ENCODE measurements at regions of chr7 and their contacts with region 1.

Region 1: DNA sequence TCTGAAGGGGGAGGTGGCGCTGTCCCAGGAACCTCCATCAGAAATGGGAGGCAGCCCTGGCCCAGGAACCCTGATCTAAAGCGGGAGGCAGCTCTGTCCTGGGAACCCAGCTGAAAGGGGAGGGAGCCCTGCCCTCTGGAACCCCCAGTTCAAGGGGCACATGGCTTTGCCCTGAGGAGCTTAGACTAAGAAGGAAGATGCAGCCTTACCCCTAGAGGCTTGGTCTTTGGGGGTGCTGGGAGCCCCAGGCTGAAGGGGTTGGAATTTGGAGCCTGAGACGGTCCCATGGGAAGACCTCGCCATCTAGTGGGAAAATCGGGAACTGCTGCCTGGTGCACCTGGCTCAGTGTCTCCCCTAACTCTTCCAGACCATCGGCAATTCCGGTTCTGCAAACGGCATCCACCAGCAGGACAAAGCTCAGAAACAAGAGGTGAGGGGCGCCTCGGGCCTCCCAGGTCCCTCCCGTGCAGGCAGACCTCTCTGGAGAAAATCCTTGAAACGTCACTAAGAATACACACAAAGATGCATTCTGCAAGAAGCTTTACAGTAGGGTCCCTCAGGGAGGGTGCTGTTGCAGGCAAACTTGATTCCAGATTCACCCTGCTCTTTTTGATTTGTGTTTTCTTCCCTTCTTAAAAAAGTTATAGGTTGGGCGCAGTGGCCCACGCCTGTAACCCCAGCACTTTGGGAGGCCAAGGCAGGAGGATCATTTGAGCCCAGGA is 52.4 kb upstream of the GTF2IRD1 start:
- DNase-seq: peak; percentile 28
- ATAC-seq: peak; percentile 78
- H3K4me3 ChIP-seq: no peak overlapping the region
- H3K27ac ChIP-seq: peak overlapping the region; percentile 37
- H3K4me1 ChIP-seq: peaks cover 0 to 13% of the 10 kb centered on the region in 2 experiments; a peak in 1 of 4 replicates
- H3K27me3 ChIP-seq: no peaks in the 10 kb centered on the region
- CTCF ChIP-seq: peak; percentile 85 to 99 (median 97)
- POLR2A ChIP-seq: no peak
- RAD21 ChIP-seq: peak; percentile 93

Region 2: GRCh38 chr7:73865738-73866445 is 535.4 kb before region 1 on chr7:
- CTCF ChIA-PET with region 1: no interaction called
- POLR2A ChIA-PET with region 1: no interaction called
- RAD21 ChIA-PET with region 1: interaction called in 1 of 2 experiments, 4 read pairs
- intact Hi-C with region 1: loop called (anchors 1 kb)
- DNase-seq: no peak
- ATAC-seq: peak; percentile 88
- H3K4me3 ChIP-seq: no peak overlapping the region
- H3K27ac ChIP-seq: no peak overlapping the region
- H3K4me1 ChIP-seq: no peaks in the 10 kb centered on the region
- H3K27me3 ChIP-seq: no peaks in the 10 kb centered on the region
- CTCF ChIP-seq: peak; percentile 70 to 75 (median 73); a peak in 5 of 6 replicates
- POLR2A ChIP-seq: no peak
- RAD21 ChIP-seq: peak; percentile 91

Region 3: GRCh38 chr7:74068393-74069085 is 332.8 kb before region 1 on chr7:
- CTCF ChIA-PET with region 1: interaction called, 7 read pairs
- POLR2A ChIA-PET with region 1: no interaction called
- RAD21 ChIA-PET with region 1: interaction called in 1 of 2 experiments, 3 read pairs
- intact Hi-C with region 1: loop called (anchors 5 kb)
- DNase-seq: no peak
- ATAC-seq: no peak
- H3K4me3 ChIP-seq: no peak overlapping the region
- H3K27ac ChIP-seq: no peak overlapping the region
- H3K4me1 ChIP-seq: peaks cover 5 to 17% of the 10 kb centered on the region in 2 experiments
- H3K27me3 ChIP-seq: no peaks in the 10 kb centered on the region
- CTCF ChIP-seq: no peak
- POLR2A ChIP-seq: no peak
- RAD21 ChIP-seq: no peak

Region 4: DNA sequence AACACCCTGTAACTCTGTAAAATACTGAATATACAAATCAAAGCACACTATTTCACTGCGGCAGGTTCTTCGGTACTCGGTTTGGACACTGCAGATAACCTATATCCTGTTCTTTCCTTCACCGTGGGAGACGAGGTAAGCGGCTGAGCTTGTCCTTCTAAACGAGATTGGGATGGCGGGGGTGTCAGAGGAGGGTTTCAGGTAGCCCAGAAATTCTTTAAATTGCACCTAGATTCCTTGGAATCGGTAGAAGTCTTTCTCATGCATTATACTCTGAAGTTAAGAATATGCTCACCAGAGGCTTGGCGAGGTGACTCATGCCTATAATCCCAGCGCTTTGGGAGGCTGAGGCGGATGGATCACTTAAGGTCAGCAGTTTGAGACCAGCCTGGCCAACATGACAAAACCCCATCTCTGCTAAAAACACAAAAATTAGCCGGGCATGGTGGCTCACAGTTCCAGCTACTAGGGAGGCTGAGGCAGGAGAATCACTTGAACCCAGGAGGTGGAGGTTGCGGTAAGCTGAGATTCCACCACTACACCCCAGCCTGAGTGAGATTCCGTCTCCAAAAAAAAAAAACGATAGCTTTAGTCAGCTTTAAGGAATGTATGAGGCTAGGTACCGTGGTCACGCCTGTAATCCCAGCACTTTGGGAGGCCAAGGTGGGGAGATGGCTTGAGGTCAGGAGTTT is 201.6 kb before region 1 on chr7:
- CTCF ChIA-PET with region 1: interaction called, 79 read pairs
- POLR2A ChIA-PET with region 1: no interaction called
- RAD21 ChIA-PET with region 1: no interaction called
- intact Hi-C with region 1: no loop called
- DNase-seq: peak; percentile 78
- ATAC-seq: peak; percentile 80
- H3K4me3 ChIP-seq: peak overlapping the region in 1 of 2 experiments; percentile 38; a peak in 2 of 4 replicates
- H3K27ac ChIP-seq: peak overlapping the region; percentile 95
- H3K4me1 ChIP-seq: peaks cover 43 to 53% of the 10 kb centered on the region in 2 experiments
- H3K27me3 ChIP-seq: no peaks in the 10 kb centered on the region
- CTCF ChIP-seq: no peak
- POLR2A ChIP-seq: no peak
- RAD21 ChIP-seq: no peak

Region 5: GRCh38 chr7:74206589-74207120 is 194.6 kb before region 1 on chr7:
- CTCF ChIA-PET with region 1: interaction called, 79 read pairs
- POLR2A ChIA-PET with region 1: interaction called, 5 read pairs
- RAD21 ChIA-PET with region 1: interaction called, 11 to 19 read pairs
- intact Hi-C with region 1: loop called (anchors 1 kb)
- DNase-seq: peak; percentile 42
- ATAC-seq: peak; percentile 70
- H3K4me3 ChIP-seq: peak overlapping the region; percentile 28 to 38
- H3K27ac ChIP-seq: no peak overlapping the region
- H3K4me1 ChIP-seq: peaks cover 30 to 49% of the 10 kb centered on the region in 2 experiments
- H3K27me3 ChIP-seq: no peaks in the 10 kb centered on the region
- CTCF ChIP-seq: peak; percentile 96 to 98 (median 97)
- POLR2A ChIP-seq: no peak
- RAD21 ChIP-seq: peak; percentile 99

Region 6: DNA sequence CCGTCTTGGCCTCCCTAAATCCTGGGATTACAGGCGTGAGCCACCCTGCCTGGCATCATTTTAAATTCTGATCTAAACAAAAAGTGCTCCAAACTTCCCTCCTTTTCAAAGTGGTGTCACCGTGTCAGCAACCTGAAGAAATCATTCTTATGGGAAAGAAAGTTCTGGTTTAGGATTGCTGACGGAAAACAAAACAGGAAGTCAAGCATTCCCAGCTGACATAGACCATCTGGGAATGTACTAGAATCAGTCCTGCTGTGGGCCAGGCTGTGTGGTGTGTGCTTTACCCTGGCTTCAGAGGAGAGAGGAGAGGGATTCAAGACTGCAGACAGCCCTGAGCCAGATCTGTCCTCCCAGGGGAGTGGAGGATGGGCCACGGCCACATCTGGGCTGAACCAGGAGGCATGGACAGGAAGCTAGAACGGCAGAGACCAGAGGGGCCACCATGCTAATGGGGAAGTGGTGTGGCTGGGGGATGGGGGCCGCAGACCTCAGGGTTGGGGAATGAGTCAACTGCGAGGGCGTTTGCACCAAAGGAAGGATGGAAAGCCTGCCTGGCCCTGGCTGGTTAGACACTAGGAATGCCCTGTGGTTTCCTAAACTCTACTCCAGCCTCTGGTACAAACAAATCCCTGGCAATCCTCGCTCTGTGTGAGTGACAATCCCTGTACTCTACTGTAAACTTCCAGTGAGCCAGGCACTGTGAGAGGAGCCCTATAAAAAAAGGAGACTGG is 128.8 kb before region 1 on chr7:
- CTCF ChIA-PET with region 1: interaction called, 19 read pairs
- POLR2A ChIA-PET with region 1: no interaction called
- RAD21 ChIA-PET with region 1: interaction called in 1 of 2 experiments, 4 read pairs
- intact Hi-C with region 1: loop called (anchors 10 kb)
- DNase-seq: no peak
- ATAC-seq: no peak
- H3K4me3 ChIP-seq: no peak overlapping the region
- H3K27ac ChIP-seq: peak overlapping the region; percentile 36; the same call in 1 of the 2 replicates
- H3K4me1 ChIP-seq: peaks cover 11 to 39% of the 10 kb centered on the region in 2 experiments
- H3K27me3 ChIP-seq: no peaks in the 10 kb centered on the region
- CTCF ChIP-seq: no peak
- POLR2A ChIP-seq: no peak
- RAD21 ChIP-seq: no peak

Region 7: DNA sequence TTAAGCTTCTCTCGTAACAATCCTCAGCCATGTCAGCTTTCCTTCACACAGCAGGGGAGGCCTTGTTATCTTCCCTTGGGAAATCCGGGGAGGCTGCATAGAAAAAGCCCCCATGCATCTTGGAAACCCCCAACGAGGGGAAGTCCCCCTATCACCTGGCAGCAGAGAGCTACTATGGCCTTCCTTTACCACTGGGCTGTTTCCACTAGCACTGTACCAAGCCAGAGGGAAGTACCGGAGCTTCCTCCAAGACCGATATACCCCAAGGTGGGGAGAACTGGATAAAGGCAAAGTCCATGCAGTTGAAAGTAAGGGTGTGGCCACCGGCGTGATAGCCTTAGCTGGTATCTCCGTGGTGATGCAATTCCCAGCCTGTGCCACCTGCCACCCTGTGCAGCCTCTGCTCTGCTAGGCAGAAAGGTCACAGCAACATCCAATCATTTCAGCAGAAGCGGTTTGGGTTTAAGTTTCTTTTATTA is 116.5 kb before region 1 on chr7:
- CTCF ChIA-PET with region 1: no interaction called
- POLR2A ChIA-PET with region 1: no interaction called
- RAD21 ChIA-PET with region 1: no interaction called
- intact Hi-C with region 1: no loop called
- DNase-seq: no peak
- ATAC-seq: no peak
- H3K4me3 ChIP-seq: no peak overlapping the region
- H3K27ac ChIP-seq: no peak overlapping the region
- H3K4me1 ChIP-seq: peaks cover 28 to 52% of the 10 kb centered on the region in 2 experiments
- H3K27me3 ChIP-seq: no peaks in the 10 kb centered on the region
- CTCF ChIP-seq: no peak
- POLR2A ChIP-seq: no peak
- RAD21 ChIP-seq: no peak

Measured in HCT116 (cell line).